ENCODE measurements at regions of chr1 and their contacts with region 1.

Region 1: GRCh38 chr1:46724991-46725735 is 6.2 kb upstream of the EFCAB14 start:
- DNase-seq: peak; percentile 80
- ATAC-seq: peak; percentile 98
- H3K4me3 Mint-ChIP-seq: no peak overlapping the region
- H3K27ac Mint-ChIP-seq: no peak overlapping the region
- H3K4me1 Mint-ChIP-seq: no peaks in the 10 kb centered on the region
- H3K27me3 Mint-ChIP-seq: peaks cover 29% of the 10 kb centered on the region

Region 2: GRCh38 chr1:46406881-46407608 is 318.1 kb before region 1 on chr1:
- CTCF ChIA-PET with region 1: no interaction called
- POLR2A ChIA-PET with region 1: no interaction called
- intact Hi-C with region 1: loop called in 1 of 2 experiments (anchors 5 kb)
- DNase-seq: no peak
- ATAC-seq: no peak
- H3K4me3 Mint-ChIP-seq: no peak overlapping the region
- H3K27ac Mint-ChIP-seq: no peak overlapping the region
- H3K4me1 Mint-ChIP-seq: no peaks in the 10 kb centered on the region
- H3K27me3 Mint-ChIP-seq: no peaks in the 10 kb centered on the region

Region 3: GRCh38 chr1:46477153-46477929 is 247.8 kb before region 1 on chr1:
- CTCF ChIA-PET with region 1: no interaction called
- POLR2A ChIA-PET with region 1: no interaction called
- intact Hi-C with region 1: loop called (anchors 1 kb)
- DNase-seq: peak; percentile 89
- ATAC-seq: peak; percentile 98
- H3K4me3 Mint-ChIP-seq: no peak overlapping the region
- H3K27ac Mint-ChIP-seq: no peak overlapping the region
- H3K4me1 Mint-ChIP-seq: no peaks in the 10 kb centered on the region
- H3K27me3 Mint-ChIP-seq: peaks cover 24% of the 10 kb centered on the region